Caco-2 (cell line): ENCODE measurements at regions of chr3 and their contacts with region 1.

Region 1: GRCh38 chr3:174955513-174956001 is 96.4 kb downstream of the NAALADL2 start:
- DNase-seq: peak; percentile 65 to 73
- H3K4me3 ChIP-seq: no peak overlapping the region
- H3K4me3 Mint-ChIP-seq: no peak overlapping the region
- H3K27ac Mint-ChIP-seq: peak overlapping the region; percentile 70
- H3K4me1 ChIP-seq: peaks cover 19% of the 10 kb centered on the region
- H3K4me1 Mint-ChIP-seq: peaks cover 30% of the 10 kb centered on the region
- H3K27me3 ChIP-seq: no peaks in the 10 kb centered on the region
- H3K27me3 Mint-ChIP-seq: no peaks in the 10 kb centered on the region
- CTCF ChIP-seq: no peak

Region 2: DNA sequence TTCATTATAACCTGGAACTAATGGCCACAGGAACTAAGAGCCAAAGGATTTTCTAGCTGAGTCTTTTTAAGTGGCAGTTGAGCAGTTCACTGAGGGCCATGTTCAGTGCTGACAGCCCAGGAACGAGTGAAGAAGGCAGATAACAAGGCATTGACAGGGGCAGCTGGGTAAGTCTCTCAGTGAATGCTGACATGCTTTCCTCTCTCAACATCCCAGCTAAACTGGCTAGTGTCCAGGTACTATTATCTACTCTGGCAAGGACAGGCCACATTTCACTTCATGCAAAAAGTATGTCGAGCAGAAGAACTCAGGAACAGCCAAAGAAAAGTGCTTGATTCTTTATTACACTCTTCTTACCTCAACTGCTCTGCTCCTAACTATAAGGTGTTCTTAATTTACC is 1042.2 kb before region 1 on chr3:
- CTCF ChIA-PET with region 1: no interaction called
- POLR2A ChIA-PET with region 1: no interaction called
- intact Hi-C with region 1: no loop called
- DNase-seq: no peak
- H3K4me3 ChIP-seq: no peak overlapping the region
- H3K4me3 Mint-ChIP-seq: no peak overlapping the region
- H3K27ac Mint-ChIP-seq: no peak overlapping the region
- H3K4me1 ChIP-seq: no peaks in the 10 kb centered on the region
- H3K4me1 Mint-ChIP-seq: no peaks in the 10 kb centered on the region
- H3K27me3 ChIP-seq: no peaks in the 10 kb centered on the region
- H3K27me3 Mint-ChIP-seq: peaks cover 2% of the 10 kb centered on the region
- CTCF ChIP-seq: no peak

Region 3: GRCh38 chr3:174413057-174413912 is 542.3 kb before region 1 on chr3:
- CTCF ChIA-PET with region 1: no interaction called
- POLR2A ChIA-PET with region 1: no interaction called
- intact Hi-C with region 1: loop called (anchors 1 kb)
- DNase-seq: peak in 1 of 2 experiments; percentile 56
- H3K4me3 ChIP-seq: no peak overlapping the region
- H3K4me3 Mint-ChIP-seq: peak overlapping the region; percentile 32
- H3K27ac Mint-ChIP-seq: peak overlapping the region; percentile 66
- H3K4me1 ChIP-seq: peaks cover 29% of the 10 kb centered on the region
- H3K4me1 Mint-ChIP-seq: peaks cover 31% of the 10 kb centered on the region
- H3K27me3 ChIP-seq: no peaks in the 10 kb centered on the region
- H3K27me3 Mint-ChIP-seq: no peaks in the 10 kb centered on the region
- CTCF ChIP-seq: no peak

Region 4: DNA sequence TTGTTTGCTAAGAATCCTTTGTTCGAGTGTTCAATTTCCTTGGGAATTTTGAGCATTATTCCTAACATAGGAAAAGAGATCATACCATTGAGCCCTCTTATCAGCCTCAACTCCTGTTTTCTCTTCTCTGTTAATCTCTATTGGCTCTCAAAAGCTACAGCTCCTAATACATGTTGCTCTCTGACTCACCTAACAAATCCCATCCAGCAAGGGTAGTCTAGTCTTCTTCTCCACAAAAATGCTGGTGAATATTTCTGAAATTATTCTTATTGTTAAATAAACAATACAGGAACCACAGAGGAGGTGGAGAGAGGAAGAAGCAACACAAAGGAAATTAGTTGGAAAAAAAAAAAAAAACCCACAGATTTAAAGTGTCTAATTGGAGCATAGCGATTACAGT is 422.3 kb before region 1 on chr3:
- CTCF ChIA-PET with region 1: no interaction called
- POLR2A ChIA-PET with region 1: no interaction called
- intact Hi-C with region 1: loop called (anchors 10 kb)
- DNase-seq: no peak
- H3K4me3 ChIP-seq: no peak overlapping the region
- H3K4me3 Mint-ChIP-seq: no peak overlapping the region
- H3K27ac Mint-ChIP-seq: no peak overlapping the region
- H3K4me1 ChIP-seq: peaks cover 48% of the 10 kb centered on the region
- H3K4me1 Mint-ChIP-seq: peaks cover 32% of the 10 kb centered on the region
- H3K27me3 ChIP-seq: no peaks in the 10 kb centered on the region
- H3K27me3 Mint-ChIP-seq: no peaks in the 10 kb centered on the region
- CTCF ChIP-seq: no peak

Region 5: DNA sequence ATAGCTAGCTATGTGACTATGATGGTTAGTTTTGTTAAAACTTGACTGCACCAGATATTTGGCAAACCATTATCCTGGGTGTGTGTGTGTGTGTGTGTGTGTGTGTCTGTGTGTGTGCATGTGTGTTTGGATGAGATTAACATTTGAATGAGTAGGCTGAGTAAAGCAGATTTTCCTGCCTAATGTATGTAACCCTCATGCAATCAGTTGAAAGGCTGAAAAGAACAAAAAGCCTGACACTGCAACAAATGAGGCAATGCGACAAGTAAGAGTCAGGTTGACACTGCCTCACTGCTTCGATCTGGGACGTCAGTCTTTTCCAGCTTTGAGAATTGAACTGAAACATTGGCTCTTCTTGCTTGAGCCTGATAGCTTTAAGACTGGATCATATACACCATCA is 546.6 kb after region 1 on chr3:
- CTCF ChIA-PET with region 1: no interaction called
- POLR2A ChIA-PET with region 1: no interaction called
- intact Hi-C with region 1: no loop called
- DNase-seq: no peak
- H3K4me3 ChIP-seq: no peak overlapping the region
- H3K4me3 Mint-ChIP-seq: no peak overlapping the region
- H3K27ac Mint-ChIP-seq: no peak overlapping the region
- H3K4me1 ChIP-seq: no peaks in the 10 kb centered on the region
- H3K4me1 Mint-ChIP-seq: no peaks in the 10 kb centered on the region
- H3K27me3 ChIP-seq: no peaks in the 10 kb centered on the region
- H3K27me3 Mint-ChIP-seq: no peaks in the 10 kb centered on the region
- CTCF ChIP-seq: no peak